Natural killer cell (primary cell): ENCODE measurements at regions of chr6 and their contacts with region 1.

Region 1: GRCh38 chr6:16761471-16762267 is 409 bp upstream of the ATXN1 start:
- DNase-seq: peak; percentile 82 to 91
- ATAC-seq: peak; percentile 47 to 68 (median 59)
- H3K4me3 ChIP-seq: peak overlapping the region; percentile 54
- H3K4me3 Mint-ChIP-seq: peak overlapping the region; percentile 98
- H3K27ac ChIP-seq: peak overlapping the region; percentile 98
- H3K27ac Mint-ChIP-seq: peak overlapping the region; percentile 95 to 98
- H3K4me1 ChIP-seq: peaks cover 15% of the 10 kb centered on the region
- H3K4me1 Mint-ChIP-seq: peaks cover 52 to 65% of the 10 kb centered on the region in 2 donors
- H3K27me3 ChIP-seq: no peaks in the 10 kb centered on the region
- H3K27me3 Mint-ChIP-seq: no peaks in the 10 kb centered on the region
- CTCF ChIP-seq: no peak

Region 2: GRCh38 chr6:16128759-16129622 is 632.7 kb before region 1 on chr6 and contains the start of gene MYLIP:
- intact Hi-C with region 1: loop called (anchors 10 kb)
- DNase-seq: peak; percentile 97 to 98
- ATAC-seq: peak; percentile 74 to 93 (median 83)
- H3K4me3 ChIP-seq: peak within 1 kb of the TSS; percentile 99
- H3K4me3 Mint-ChIP-seq: peak within 1 kb of the TSS; percentile 97
- H3K27ac ChIP-seq: peak within 1 kb of the TSS; percentile 96
- H3K27ac Mint-ChIP-seq: peak within 1 kb of the TSS; percentile 92
- H3K4me1 ChIP-seq: peaks cover 17% of the 10 kb centered on the region
- H3K4me1 Mint-ChIP-seq: peaks cover 43 to 60% of the 10 kb centered on the region in 2 donors
- H3K27me3 ChIP-seq: no peaks in the 10 kb centered on the region
- H3K27me3 Mint-ChIP-seq: no peaks in the 10 kb centered on the region
- CTCF ChIP-seq: peak; percentile 60
- total RNA-seq, gene MYLIP: 127 to 207 (median 150) TPM

Region 3: GRCh38 chr6:16319813-16320532 is 441.7 kb before region 1 on chr6:
- intact Hi-C with region 1: loop called (anchors 2 kb)
- DNase-seq: peak; percentile 63 to 86
- ATAC-seq: peak; percentile 59 to 73 (median 64)
- H3K4me3 ChIP-seq: peak overlapping the region; percentile 19
- H3K4me3 Mint-ChIP-seq: peak overlapping the region; percentile 69
- H3K27ac ChIP-seq: peak overlapping the region; percentile 77
- H3K27ac Mint-ChIP-seq: peak overlapping the region; percentile 77 to 95
- H3K4me1 ChIP-seq: peaks cover 73% of the 10 kb centered on the region
- H3K4me1 Mint-ChIP-seq: peaks cover 67 to 70% of the 10 kb centered on the region in 2 donors
- H3K27me3 ChIP-seq: no peaks in the 10 kb centered on the region
- H3K27me3 Mint-ChIP-seq: no peaks in the 10 kb centered on the region
- CTCF ChIP-seq: no peak

Region 4: GRCh38 chr6:16481697-16482399 is 279.8 kb before region 1 on chr6:
- intact Hi-C with region 1: loop called (anchors 5 kb)
- DNase-seq: peak in 1 of 2 donors; percentile 92
- ATAC-seq: peak; percentile 85 to 89 (median 86)
- H3K4me3 ChIP-seq: no peak overlapping the region
- H3K4me3 Mint-ChIP-seq: peak overlapping the region; percentile 17
- H3K27ac ChIP-seq: peak overlapping the region; percentile 50
- H3K27ac Mint-ChIP-seq: peak overlapping the region; percentile 82 to 91
- H3K4me1 ChIP-seq: peaks cover 23% of the 10 kb centered on the region
- H3K4me1 Mint-ChIP-seq: peaks cover 46 to 50% of the 10 kb centered on the region in 2 donors
- H3K27me3 ChIP-seq: no peaks in the 10 kb centered on the region
- H3K27me3 Mint-ChIP-seq: no peaks in the 10 kb centered on the region
- CTCF ChIP-seq: no peak

Region 5: DNA sequence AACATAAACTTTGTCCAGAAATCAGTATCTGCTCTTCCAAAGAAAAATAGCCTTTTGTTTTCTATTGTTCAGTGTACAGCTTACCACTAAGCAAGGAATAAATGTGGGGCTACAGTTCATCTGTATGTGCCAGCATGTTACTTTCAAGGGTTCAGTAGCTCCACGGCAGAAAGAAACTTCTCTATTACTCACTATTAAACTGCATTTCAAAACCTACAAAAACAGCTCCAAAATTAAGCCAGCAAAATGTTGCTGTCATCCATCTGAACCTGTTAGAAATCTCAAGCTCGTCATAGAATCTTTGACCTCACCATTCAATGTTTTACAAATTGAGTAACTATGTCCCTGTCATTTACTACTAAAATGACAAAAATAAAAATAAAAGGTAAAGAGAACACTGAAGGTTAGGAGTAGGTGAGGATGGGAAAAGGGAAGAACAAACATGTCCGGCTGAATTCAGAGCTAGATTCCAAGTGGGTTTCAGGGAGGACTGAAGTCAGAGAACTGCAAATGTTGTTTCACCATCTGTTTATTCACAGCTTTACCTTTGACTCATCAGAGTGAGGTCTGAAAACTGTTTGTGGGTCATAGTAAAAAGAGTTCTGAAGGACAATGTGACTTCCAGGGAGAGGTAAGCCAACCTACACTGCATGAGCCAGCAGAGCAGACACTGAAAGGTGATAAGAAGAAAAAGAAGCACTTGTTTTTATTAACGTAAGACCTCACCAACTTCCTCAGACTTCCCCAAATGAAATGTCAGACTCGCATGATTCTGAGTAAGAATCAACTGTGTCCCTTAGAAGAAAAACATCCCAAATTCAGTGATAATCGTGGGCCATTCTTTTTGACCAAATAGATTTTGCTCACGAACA is 62.4 kb before region 1 on chr6:
- intact Hi-C with region 1: loop called (anchors 1 kb)
- DNase-seq: peak in 1 of 2 donors; percentile 65
- ATAC-seq: peak; percentile 68 to 80 (median 72)
- H3K4me3 ChIP-seq: no peak overlapping the region
- H3K4me3 Mint-ChIP-seq: peak overlapping the region; percentile 87
- H3K27ac ChIP-seq: peak overlapping the region; percentile 69
- H3K27ac Mint-ChIP-seq: peak overlapping the region; percentile 85 to 92
- H3K4me1 ChIP-seq: peaks cover 27% of the 10 kb centered on the region
- H3K4me1 Mint-ChIP-seq: peaks cover 61 to 67% of the 10 kb centered on the region in 2 donors
- H3K27me3 ChIP-seq: no peaks in the 10 kb centered on the region
- H3K27me3 Mint-ChIP-seq: no peaks in the 10 kb centered on the region
- CTCF ChIP-seq: no peak

Region 6: GRCh38 chr6:16964553-16965501 is 203.2 kb after region 1 on chr6:
- intact Hi-C with region 1: loop called (anchors 10 kb)
- DNase-seq: peak; percentile 58 to 78
- ATAC-seq: peak; percentile 86 to 99 (median 95)
- H3K4me3 ChIP-seq: no peak overlapping the region
- H3K4me3 Mint-ChIP-seq: no peak overlapping the region
- H3K27ac ChIP-seq: no peak overlapping the region
- H3K27ac Mint-ChIP-seq: no peak overlapping the region
- H3K4me1 ChIP-seq: peaks cover 3% of the 10 kb centered on the region
- H3K4me1 Mint-ChIP-seq: peaks cover 5 to 7% of the 10 kb centered on the region in 2 donors
- H3K27me3 ChIP-seq: no peaks in the 10 kb centered on the region
- H3K27me3 Mint-ChIP-seq: peaks cover 13 to 18% of the 10 kb centered on the region in 2 donors
- CTCF ChIP-seq: peak; percentile 74